Activated CD4-positive, alpha-beta memory T cell treated with anti-CD3 and anti-CD28 coated beads, Interleukin-2, amount 10 ng/mL, durations not matched to agents 7 days and 5 days (primary cell): ENCODE measurements at regions of chr15 and their contacts with region 1.

Region 1: DNA sequence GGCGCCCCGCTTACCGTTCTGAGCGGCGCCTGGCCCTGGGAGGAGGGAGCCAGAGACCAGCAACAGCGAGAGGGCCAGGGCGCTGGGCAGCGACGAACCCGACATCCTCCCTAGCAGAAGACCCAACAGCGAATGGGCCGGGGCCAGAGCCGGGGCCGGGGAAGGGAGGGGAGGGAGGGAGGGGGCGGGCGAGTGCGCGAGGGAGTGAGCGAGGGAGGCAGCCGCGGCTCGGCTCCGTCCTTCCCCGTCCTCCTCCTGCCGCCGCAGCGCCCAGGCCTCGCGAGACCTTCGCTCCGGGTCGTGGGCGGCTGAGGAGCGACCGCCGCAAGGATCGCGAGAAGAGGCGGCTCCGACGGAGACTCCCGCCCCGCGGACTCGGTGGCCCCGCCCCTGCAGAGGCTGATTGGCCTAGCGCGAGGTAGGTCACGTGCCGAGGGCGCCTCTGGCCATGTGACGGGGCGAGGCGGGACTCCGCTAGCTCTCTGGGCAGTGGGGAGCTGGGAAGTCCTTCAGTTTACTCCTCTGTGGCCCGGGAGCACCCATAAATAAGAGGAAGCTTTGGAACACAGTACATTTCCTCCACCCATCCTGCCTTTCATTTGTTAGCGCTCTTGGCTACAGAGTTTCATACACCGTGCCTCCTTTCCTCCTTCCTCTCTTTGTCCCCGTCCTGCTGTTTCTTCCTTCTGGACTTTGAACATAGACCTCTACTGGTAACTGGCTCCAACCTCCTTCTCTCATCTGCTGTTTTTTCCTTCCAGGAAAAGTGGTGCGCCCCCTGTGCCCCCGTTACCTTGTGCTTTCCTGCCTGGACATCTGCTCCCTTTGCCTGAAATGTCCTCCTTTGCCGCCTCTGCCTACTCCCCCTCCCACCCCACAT is at the start of gene NPTN:
- DNase-seq: peak; percentile 99
- H3K4me3 Mint-ChIP-seq: peak within 1 kb of the TSS; percentile 85
- H3K27ac Mint-ChIP-seq: peak within 1 kb of the TSS; percentile 48
- H3K4me1 Mint-ChIP-seq: peaks cover 54% of the 10 kb centered on the region
- H3K27me3 Mint-ChIP-seq: peaks cover 25% of the 10 kb centered on the region
- total RNA-seq, gene NPTN: 44.5 to 46.0 TPM

Region 2: GRCh38 chr15:73555080-73555479 is 78.3 kb before region 1 on chr15:
- CTCF ChIA-PET with region 1: interaction called, 72 read pairs
- POLR2A ChIA-PET with region 1: interaction called, 8 read pairs
- DNase-seq: no peak
- H3K4me3 Mint-ChIP-seq: no peak overlapping the region
- H3K27ac Mint-ChIP-seq: no peak overlapping the region
- H3K4me1 Mint-ChIP-seq: no peaks in the 10 kb centered on the region
- H3K27me3 Mint-ChIP-seq: no peaks in the 10 kb centered on the region

Region 3: GRCh38 chr15:73571346-73571745 is 62.0 kb before region 1 on chr15:
- CTCF ChIA-PET with region 1: interaction called, 16 read pairs
- POLR2A ChIA-PET with region 1: no interaction called
- DNase-seq: no peak
- H3K4me3 Mint-ChIP-seq: no peak overlapping the region
- H3K27ac Mint-ChIP-seq: peak overlapping the region; percentile 57
- H3K4me1 Mint-ChIP-seq: peaks cover 67% of the 10 kb centered on the region
- H3K27me3 Mint-ChIP-seq: no peaks in the 10 kb centered on the region

Region 4: DNA sequence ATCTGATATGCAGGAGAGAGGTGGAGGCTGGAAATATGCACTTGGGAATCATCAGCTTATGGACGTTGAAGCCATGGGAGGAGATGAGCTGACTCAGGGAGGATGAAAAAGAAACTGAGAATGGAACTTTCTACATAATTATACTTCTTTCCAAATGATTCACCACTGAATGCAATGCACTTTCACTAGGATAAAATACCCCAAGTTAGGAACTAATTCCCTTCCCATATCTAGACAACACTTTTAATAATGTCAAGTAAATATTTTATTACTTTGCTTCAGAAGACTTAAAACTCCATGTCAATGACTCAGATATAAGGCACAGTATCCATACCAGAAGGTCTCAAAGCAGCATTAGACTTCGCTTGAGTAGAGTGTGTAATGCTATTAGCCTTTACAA is 24.4 kb before region 1 on chr15:
- CTCF ChIA-PET with region 1: interaction called, 47 read pairs
- POLR2A ChIA-PET with region 1: interaction called, 5 read pairs
- DNase-seq: no peak
- H3K4me3 Mint-ChIP-seq: no peak overlapping the region
- H3K27ac Mint-ChIP-seq: no peak overlapping the region
- H3K4me1 Mint-ChIP-seq: peaks cover 34% of the 10 kb centered on the region
- H3K27me3 Mint-ChIP-seq: no peaks in the 10 kb centered on the region

Region 5: GRCh38 chr15:73677146-73677607 is 43.8 kb after region 1 on chr15:
- CTCF ChIA-PET with region 1: interaction called, 21 read pairs
- POLR2A ChIA-PET with region 1: no interaction called
- DNase-seq: peak; percentile 55
- H3K4me3 Mint-ChIP-seq: no peak overlapping the region
- H3K27ac Mint-ChIP-seq: no peak overlapping the region
- H3K4me1 Mint-ChIP-seq: peaks cover 17% of the 10 kb centered on the region
- H3K27me3 Mint-ChIP-seq: peaks cover 36% of the 10 kb centered on the region

Region 6: GRCh38 chr15:73691396-73691795 is 58.0 kb after region 1 on chr15:
- CTCF ChIA-PET with region 1: interaction called, 172 read pairs
- POLR2A ChIA-PET with region 1: interaction called, 20 read pairs
- DNase-seq: no peak
- H3K4me3 Mint-ChIP-seq: no peak overlapping the region
- H3K27ac Mint-ChIP-seq: no peak overlapping the region
- H3K4me1 Mint-ChIP-seq: peaks cover 26% of the 10 kb centered on the region
- H3K27me3 Mint-ChIP-seq: peaks cover 46% of the 10 kb centered on the region

Region 7: DNA sequence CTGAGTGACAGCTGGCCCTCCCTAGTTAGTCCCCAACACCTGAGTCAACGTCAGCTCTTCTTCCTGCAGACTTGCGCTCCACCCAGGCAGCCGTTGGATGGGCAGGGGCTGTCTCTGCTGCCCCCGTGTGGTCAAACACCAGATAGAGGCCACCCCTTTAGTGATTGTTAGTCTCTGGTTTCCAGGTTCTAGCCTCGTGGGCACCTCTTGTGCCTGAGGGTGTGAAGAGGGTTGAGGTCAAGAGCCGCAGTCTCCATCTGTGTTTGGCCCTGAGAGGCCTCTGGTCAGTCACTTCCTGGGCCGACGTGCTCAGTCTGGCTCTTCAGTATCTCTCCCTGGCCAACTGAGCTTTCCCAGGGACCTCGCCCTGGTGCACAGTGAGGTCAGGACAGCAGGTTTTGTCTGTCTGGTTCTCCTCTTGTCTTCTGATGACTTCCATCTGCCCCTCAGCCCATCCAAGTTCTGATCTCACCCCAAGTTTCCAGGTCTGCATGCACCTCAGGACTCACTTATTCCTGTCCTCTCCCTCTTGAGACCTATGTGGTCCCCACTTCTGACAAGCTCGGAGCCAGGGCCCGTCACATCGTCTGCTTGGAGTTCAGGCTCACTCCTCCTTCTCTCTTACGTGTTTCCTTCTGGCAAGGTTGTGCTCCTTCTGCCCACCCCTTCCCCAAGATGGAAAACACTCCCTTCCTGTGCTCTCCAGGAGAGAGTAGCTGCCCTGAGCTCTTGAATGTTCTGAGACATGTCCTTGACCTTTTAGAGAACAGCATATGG is 71.7 kb after region 1 on chr15:
- CTCF ChIA-PET with region 1: interaction called, 172 read pairs
- POLR2A ChIA-PET with region 1: interaction called, 4 read pairs
- DNase-seq: peak; percentile 76
- H3K4me3 Mint-ChIP-seq: no peak overlapping the region
- H3K27ac Mint-ChIP-seq: no peak overlapping the region
- H3K4me1 Mint-ChIP-seq: peaks cover 9% of the 10 kb centered on the region
- H3K27me3 Mint-ChIP-seq: peaks cover 5% of the 10 kb centered on the region